Gastrocnemius medialis (tissue), 4 donors: ENCODE measurements at regions of chr12 and their contacts with region 1.

Region 1: DNA sequence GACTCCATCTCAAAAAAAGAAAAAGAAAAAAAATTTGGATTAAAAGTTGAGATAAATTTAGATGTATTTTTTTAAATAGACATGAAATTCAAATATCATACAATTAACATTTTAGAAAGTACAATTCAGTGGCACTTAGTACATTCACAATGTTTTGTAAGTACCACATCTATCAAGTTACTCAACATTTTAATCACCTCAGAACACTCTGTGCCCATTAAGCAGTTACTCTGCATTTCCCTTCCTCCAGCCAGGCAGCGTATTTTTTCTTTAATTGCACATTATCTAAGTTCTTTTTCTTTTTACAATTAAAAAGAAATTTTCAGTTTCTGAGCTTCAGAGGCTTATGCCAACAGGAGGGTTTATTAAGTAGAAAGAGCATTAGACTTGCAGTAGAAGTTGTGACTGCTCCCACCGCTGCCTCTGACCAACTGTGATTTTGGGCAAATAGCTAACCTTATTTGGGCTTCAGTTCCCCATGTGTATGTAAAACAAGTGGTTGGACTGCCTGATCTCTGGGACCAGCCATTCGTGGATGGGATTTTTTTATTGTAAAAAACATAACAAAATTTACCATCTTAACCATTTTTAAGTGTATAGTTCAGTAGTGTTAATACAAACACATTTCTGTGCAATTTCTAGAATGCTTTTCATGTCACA is 65.7 kb downstream of the WNK1 start:
- DNase-seq: no peak
- ATAC-seq: peak; percentile 69 to 89
- H3K4me3 ChIP-seq: no peak overlapping the region
- H3K27ac ChIP-seq: peak overlapping the region; percentile 70 to 83 (median 78)
- H3K4me1 ChIP-seq: peaks cover 31 to 45% of the 10 kb centered on the region in 2 donors
- H3K27me3 ChIP-seq: no peaks in the 10 kb centered on the region
- CTCF ChIP-seq: no peak
- POLR2A ChIP-seq: no peak

Region 2: GRCh38 chr12:795305-795704 is 22.8 kb before region 1 on chr12:
- in situ Hi-C with region 1: no loop called
- intact Hi-C with region 1: no loop called
- DNase-seq: no peak
- ATAC-seq: no peak
- H3K4me3 ChIP-seq: no peak overlapping the region
- H3K27ac ChIP-seq: no peak overlapping the region
- H3K4me1 ChIP-seq: peaks cover 36 to 48% of the 10 kb centered on the region in 2 donors
- H3K27me3 ChIP-seq: no peaks in the 10 kb centered on the region
- CTCF ChIP-seq: no peak
- POLR2A ChIP-seq: no peak

Region 3: DNA sequence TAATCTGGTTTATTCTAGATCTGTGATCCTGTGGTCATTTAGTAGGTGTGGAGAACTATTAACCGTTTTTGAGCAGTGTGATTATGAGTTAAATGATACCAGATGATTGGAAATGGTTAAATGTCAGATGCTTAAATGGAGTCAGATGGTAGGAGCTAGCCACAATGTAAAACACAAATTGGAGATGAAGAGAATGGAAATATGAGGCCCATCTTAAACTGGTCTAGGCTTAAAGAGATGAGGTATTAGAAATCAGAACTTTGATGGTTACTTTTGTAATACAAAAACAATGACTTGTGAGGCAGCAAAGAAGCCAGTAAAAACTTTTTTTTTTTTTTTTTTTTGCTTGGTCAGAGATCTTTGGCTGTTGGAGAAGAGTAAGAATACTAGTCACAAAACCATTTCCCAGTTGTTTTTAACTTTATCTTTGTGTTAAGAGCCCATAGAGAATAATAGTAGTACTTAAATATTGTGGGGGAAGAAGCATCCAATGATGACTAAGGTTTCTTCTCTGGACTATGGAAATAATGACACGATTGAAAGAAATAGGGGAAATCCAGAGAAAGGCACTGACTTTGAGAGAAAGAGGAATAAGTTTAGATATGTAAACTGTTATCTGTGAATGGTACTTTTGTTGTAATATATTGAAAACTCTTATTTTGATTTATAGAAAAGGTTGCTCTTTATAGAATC is 30.2 kb after region 1 on chr12:
- in situ Hi-C with region 1: no loop called
- intact Hi-C with region 1: no loop called
- DNase-seq: no peak
- ATAC-seq: no peak
- H3K4me3 ChIP-seq: no peak overlapping the region
- H3K27ac ChIP-seq: peak overlapping the region in 3 of 4 donors; percentile 44 to 62 (median 58)
- H3K4me1 ChIP-seq: peaks cover 29 to 48% of the 10 kb centered on the region in 2 donors
- H3K27me3 ChIP-seq: no peaks in the 10 kb centered on the region
- CTCF ChIP-seq: no peak
- POLR2A ChIP-seq: no peak

Region 4: DNA sequence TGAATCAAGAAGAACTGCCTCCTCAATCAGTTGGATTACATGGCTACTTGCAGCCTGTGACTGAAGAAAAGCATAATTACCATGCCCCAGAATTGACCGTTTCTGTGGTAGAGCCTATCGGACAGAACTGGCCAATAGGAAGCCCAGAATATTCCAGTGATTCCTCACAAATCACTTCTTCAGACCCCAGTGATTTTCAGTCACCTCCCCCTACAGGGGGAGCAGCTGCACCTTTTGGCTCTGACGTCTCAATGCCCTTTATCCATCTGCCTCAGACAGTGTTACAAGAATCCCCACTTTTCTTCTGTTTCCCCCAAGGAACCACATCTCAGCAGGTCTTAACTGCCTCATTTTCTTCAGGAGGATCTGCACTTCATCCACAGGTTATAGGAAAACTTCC is 50.7 kb after region 1 on chr12:
- in situ Hi-C with region 1: no loop called
- intact Hi-C with region 1: loop called (anchors 2 kb)
- DNase-seq: no peak
- ATAC-seq: no peak
- H3K4me3 ChIP-seq: no peak overlapping the region
- H3K27ac ChIP-seq: no peak overlapping the region
- H3K4me1 ChIP-seq: peaks cover 3 to 5% of the 10 kb centered on the region in 2 donors
- H3K27me3 ChIP-seq: no peaks in the 10 kb centered on the region
- CTCF ChIP-seq: peak in 1 of 5 experiments; percentile 17
- POLR2A ChIP-seq: no peak